ENCODE measurements at regions of chr5 and their contacts with region 1.

Region 1: GRCh38 chr5:84379749-84380148 is 4.9 kb downstream of the EDIL3 start:
- DNase-seq: no peak
- ATAC-seq: no peak
- H3K4me3 ChIP-seq: no peak overlapping the region
- H3K27ac ChIP-seq: no peak overlapping the region
- H3K4me1 ChIP-seq: peaks cover 5% of the 10 kb centered on the region
- H3K27me3 ChIP-seq: peaks cover 21% of the 10 kb centered on the region
- CTCF ChIP-seq: peak; percentile 11; the same call in 1 of the 2 replicates

Region 2: GRCh38 chr5:83721953-83722901 is 657.5 kb before region 1 on chr5:
- CTCF ChIA-PET with region 1: no interaction called
- POLR2A ChIA-PET with region 1: no interaction called
- in situ Hi-C with region 1: no loop called
- intact Hi-C with region 1: loop called (anchors 5 kb)
- DNase-seq: no peak
- ATAC-seq: peak; percentile 96
- H3K4me3 ChIP-seq: peak overlapping the region; percentile 44 to 53
- H3K27ac ChIP-seq: no peak overlapping the region
- H3K4me1 ChIP-seq: peaks cover 6% of the 10 kb centered on the region; the same call in 1 of the 2 replicates
- H3K27me3 ChIP-seq: peaks cover 11% of the 10 kb centered on the region
- CTCF ChIP-seq: peak; percentile 75

Measured in Panc1 (cell line).